PC-3 (cell line): ENCODE measurements at regions of chr7 and their contacts with region 1.

Region 1: GRCh38 chr7:143929224-143929920 is 5.7 kb upstream of the OR2F2 start:
- DNase-seq: peak; percentile 8
- ATAC-seq: peak; percentile 60
- H3K4me3 ChIP-seq: no peak overlapping the region
- H3K27ac ChIP-seq: no peak overlapping the region
- H3K4me1 ChIP-seq: no peaks in the 10 kb centered on the region
- H3K27me3 ChIP-seq: peaks cover 15% of the 10 kb centered on the region; the same call in 1 of the 2 replicates
- CTCF ChIP-seq: no peak

Region 2: GRCh38 chr7:143876206-143876605 is 53.2 kb before region 1 on chr7:
- CTCF ChIA-PET with region 1: no interaction called
- POLR2A ChIA-PET with region 1: no interaction called
- intact Hi-C with region 1: no loop called
- DNase-seq: no peak
- ATAC-seq: no peak
- H3K4me3 ChIP-seq: no peak overlapping the region
- H3K27ac ChIP-seq: no peak overlapping the region
- H3K4me1 ChIP-seq: no peaks in the 10 kb centered on the region
- H3K27me3 ChIP-seq: no peaks in the 10 kb centered on the region
- CTCF ChIP-seq: no peak

Region 3: GRCh38 chr7:144164784-144165183 is 235.4 kb after region 1 on chr7:
- CTCF ChIA-PET with region 1: no interaction called
- POLR2A ChIA-PET with region 1: no interaction called
- intact Hi-C with region 1: loop called (anchors 5 kb)
- DNase-seq: no peak
- ATAC-seq: no peak
- H3K4me3 ChIP-seq: no peak overlapping the region
- H3K27ac ChIP-seq: no peak overlapping the region
- H3K4me1 ChIP-seq: no peaks in the 10 kb centered on the region
- H3K27me3 ChIP-seq: no peaks in the 10 kb centered on the region
- CTCF ChIP-seq: no peak